ENCODE measurements at regions of chr12 and their contacts with region 1.

Region 1: DNA sequence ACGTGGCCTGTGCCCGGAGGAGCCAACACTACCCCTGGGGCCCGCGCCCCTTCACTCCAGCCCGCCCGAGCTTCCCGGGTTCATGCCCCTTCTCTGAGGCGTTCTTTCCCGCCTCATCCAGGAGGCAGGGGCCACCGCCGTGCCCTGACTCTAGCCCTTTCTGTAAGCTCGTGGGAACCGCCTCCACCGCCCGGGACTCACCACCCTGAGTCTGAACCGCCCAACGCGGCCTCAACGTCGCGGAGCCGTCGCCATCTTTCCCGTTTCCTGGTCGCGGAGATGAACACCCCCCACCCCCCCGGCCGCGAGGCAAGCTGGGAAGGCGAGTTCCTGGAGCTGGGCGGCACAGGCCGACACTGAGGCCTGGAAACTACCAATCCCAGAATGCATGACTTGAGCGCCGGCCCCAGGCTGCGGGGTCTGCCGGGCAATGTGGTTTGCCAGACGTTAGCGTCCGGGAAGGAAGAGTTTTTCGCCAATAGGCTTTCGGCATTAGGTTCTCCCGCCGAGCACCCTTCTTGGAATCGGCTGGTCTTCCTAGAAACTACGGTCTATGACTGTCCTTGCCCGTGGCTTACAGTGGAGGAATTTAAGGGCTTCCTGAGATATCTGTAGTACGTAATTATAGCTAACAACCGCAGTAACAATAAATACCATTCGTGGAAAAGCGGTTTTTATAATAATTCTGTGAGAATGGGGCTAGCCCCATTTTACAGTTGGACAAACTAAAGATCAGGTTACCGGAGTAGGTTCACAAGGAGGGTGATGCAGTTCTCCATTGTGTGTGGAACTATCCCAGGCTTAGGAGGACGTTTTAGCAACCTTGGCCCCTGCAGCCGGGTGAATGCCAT is at the start of gene DDX23:
- DNase-seq: peak; percentile 97
- H3K4me3 ChIP-seq: peak within 1 kb of the TSS; percentile 85 to 92
- H3K27ac ChIP-seq: peak within 1 kb of the TSS; percentile 61 to 85
- H3K4me1 ChIP-seq: peaks cover 0 to 13% of the 10 kb centered on the region in 2 experiments; a peak in 2 of 4 replicates
- H3K27me3 ChIP-seq: no peaks in the 10 kb centered on the region
- CTCF ChIP-seq: no peak
- EP300 ChIP-seq: peak in 1 of 2 experiments; percentile 25; a peak in 1 of 4 replicates
- RAD21 ChIP-seq: no peak
- polyA plus RNA-seq, gene DDX23: 50.4 and 52.5 TPM in 2 replicates

Region 2: DNA sequence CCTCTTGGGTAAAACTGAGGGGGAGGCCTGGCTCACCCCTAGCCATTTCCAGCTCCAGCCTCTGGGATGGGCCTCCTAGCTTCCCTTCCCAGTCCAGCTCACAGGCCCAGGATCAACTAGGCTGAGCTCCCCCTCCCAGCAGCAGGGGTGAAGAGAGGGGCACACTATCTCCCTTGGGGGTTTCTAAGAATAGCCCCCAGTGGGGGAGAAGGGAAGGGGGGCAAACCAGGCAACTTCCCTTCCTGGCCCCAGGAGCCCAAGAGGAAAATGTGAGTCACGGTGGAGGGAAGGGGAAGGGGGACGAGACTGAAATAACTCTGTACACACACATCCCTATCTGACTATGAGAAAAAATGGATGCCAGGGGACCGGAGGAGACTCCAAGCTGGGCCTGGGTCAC is 72.2 kb before region 1 on chr12:
- CTCF ChIA-PET with region 1: no interaction called
- POLR2A ChIA-PET with region 1: no interaction called
- DNase-seq: no peak
- H3K4me3 ChIP-seq: no peak overlapping the region
- H3K27ac ChIP-seq: peak overlapping the region in 1 of 2 experiments; percentile 79; a peak in 2 of 4 replicates
- H3K4me1 ChIP-seq: peaks cover 4 to 14% of the 10 kb centered on the region in 2 experiments; a peak in 3 of 4 replicates
- H3K27me3 ChIP-seq: no peaks in the 10 kb centered on the region
- CTCF ChIP-seq: no peak
- EP300 ChIP-seq: peak in 1 of 2 experiments; percentile 48; a peak in 1 of 4 replicates
- RAD21 ChIP-seq: no peak

Region 3: DNA sequence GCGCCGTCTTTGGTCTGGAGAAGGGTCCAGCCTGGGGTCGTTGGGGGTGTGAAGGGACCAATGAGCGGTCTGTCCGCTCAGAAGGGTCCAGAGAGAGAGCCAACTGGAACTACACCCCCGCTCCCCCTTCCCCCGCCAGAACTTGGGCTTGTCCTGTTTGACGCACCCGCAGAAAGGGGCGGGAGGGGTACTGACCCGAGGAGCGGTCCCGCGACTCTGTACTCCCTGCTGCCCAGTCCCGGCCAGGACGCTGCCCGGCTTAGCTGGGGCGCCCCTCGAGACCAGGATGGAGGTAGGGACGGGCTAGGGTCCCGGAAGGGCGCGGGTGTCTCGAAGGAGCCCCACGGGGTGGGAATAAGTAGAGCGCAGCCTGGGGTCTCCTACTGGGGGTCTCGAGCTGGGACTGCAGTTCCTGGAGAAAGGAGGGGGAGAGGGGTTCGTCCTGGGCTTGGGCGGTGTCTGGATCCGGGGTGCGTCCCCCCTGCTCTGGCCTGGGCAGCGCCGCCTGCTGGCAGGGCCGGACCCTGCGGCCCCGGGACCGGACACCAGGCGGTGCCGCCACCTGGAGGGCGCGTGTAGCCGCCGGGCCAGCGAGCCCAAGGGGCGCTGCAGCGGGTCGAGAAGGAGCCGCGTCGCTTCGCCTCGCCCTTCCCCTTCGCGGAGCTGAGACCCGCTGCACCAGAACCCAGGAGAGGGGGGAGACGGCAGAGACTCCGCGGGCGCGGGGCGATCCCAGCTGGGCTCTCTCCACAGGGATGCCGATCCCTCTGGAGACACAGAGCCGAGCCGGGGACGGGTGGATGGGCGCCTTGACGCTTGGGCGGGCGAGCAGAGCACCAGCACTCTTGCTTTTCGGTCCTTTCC is 37.6 kb before region 1 on chr12:
- CTCF ChIA-PET with region 1: interaction called, 40 read pairs
- POLR2A ChIA-PET with region 1: no interaction called
- DNase-seq: peak; percentile 96
- H3K4me3 ChIP-seq: peak overlapping the region; percentile 68 to 75
- H3K27ac ChIP-seq: peak overlapping the region; percentile 80 to 87
- H3K4me1 ChIP-seq: peaks cover 22 to 37% of the 10 kb centered on the region in 2 experiments; a peak in 3 of 4 replicates
- H3K27me3 ChIP-seq: no peaks in the 10 kb centered on the region
- CTCF ChIP-seq: peak; percentile 92
- EP300 ChIP-seq: no peak
- RAD21 ChIP-seq: peak; percentile 18; the same call in 1 of the 2 replicates

Region 4: GRCh38 chr12:48865434-48866290 is 13.6 kb after region 1 on chr12 and contains the start of gene RND1:
- CTCF ChIA-PET with region 1: interaction called, 95 read pairs
- POLR2A ChIA-PET with region 1: interaction called, 14 read pairs
- DNase-seq: peak; percentile 94
- H3K4me3 ChIP-seq: peak within 1 kb of the TSS; percentile 62 to 92
- H3K27ac ChIP-seq: no peak within 1 kb of the TSS; a peak in 1 of 4 replicates
- H3K4me1 ChIP-seq: peaks cover 0 to 9% of the 10 kb centered on the region in 2 experiments; a peak in 1 of 4 replicates
- H3K27me3 ChIP-seq: peaks cover 16% of the 10 kb centered on the region
- CTCF ChIP-seq: 0 out of 2 replicates have a peak, but pooled peaks have one; percentile 18
- EP300 ChIP-seq: no peak
- RAD21 ChIP-seq: no peak
- polyA plus RNA-seq, gene RND1: 0.19 and 0.39 TPM in 2 replicates

Region 5: DNA sequence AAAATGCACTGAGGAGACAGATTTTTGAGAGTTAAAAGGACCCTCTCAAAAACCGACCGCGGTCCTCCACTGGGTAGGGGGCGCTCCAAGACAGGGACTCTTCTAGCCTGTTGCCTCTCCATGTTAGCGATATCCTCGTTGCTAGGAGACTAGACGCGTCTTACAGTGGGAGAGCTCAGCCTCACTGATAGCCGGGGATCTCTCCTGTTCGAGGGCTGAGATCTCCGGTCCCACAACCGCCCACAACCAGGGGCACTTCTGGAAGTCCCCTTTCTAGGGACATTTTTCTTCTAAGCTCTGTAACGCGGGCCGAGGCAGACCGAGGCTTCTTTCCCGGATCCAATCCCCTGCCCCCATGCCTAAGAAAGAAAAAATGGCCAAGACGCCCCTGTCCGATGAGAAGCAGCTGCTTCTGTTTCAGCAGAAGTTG is 51.9 kb after region 1 on chr12:
- CTCF ChIA-PET with region 1: interaction called, 16 read pairs
- POLR2A ChIA-PET with region 1: interaction called, 4 read pairs
- DNase-seq: peak; percentile 85
- H3K4me3 ChIP-seq: peak overlapping the region; percentile 53 to 84
- H3K27ac ChIP-seq: no peak overlapping the region
- H3K4me1 ChIP-seq: peaks cover 0 to 5% of the 10 kb centered on the region in 2 experiments; a peak in 1 of 4 replicates
- H3K27me3 ChIP-seq: no peaks in the 10 kb centered on the region
- CTCF ChIP-seq: peak; percentile 68
- EP300 ChIP-seq: no peak
- RAD21 ChIP-seq: peak; percentile 23; the same call in 1 of the 2 replicates

Region 6: GRCh38 chr12:48969833-48970701 is 118.0 kb after region 1 on chr12:
- CTCF ChIA-PET with region 1: interaction called, 17 read pairs
- POLR2A ChIA-PET with region 1: no interaction called
- DNase-seq: peak; percentile 83
- H3K4me3 ChIP-seq: no peak overlapping the region; a peak in 1 of 4 replicates
- H3K27ac ChIP-seq: no peak overlapping the region
- H3K4me1 ChIP-seq: peaks cover 0 to 13% of the 10 kb centered on the region in 2 experiments; a peak in 1 of 4 replicates
- H3K27me3 ChIP-seq: peaks cover 40% of the 10 kb centered on the region; the same call in 1 of the 2 replicates
- CTCF ChIP-seq: no peak
- EP300 ChIP-seq: no peak
- RAD21 ChIP-seq: no peak

Region 7: DNA sequence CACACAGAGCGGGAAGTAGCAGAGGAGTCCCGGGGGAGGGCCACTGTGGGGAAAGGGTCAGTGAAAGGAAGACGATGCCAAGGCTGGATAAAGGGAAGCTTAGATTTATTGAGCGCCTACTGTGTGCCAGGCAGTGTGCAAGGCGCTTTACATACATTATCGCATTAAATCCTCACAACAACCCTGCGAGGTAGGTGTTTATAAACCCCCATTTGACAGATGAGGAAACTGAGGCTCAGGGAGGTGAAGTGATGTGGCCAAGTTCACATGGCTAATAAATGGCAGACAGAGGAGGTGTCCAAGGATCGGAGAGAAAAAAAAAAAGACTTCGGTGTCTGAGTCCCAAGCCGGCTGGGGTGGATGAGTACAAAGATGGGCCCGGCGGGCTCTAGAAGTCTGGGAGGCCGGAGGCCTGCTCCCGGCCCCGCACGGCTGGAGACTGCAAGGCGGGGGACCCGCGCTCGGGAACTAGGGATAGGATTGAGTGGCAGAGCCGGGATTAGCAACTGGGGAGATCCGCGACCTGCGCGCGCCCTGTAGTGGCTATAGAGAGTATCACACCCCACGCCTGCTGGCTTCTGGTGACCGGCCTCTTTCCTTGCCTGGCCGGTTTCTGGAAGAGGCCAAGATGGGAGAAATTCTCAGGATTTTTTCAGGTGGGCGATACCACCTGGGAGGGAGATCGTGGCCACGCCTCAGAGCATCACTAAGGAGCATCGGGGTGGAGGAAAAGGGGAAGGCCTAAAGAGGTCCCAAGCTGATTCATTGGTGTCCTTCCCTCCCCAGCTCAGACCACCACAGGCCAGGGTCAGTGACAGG is 143.2 kb after region 1 on chr12:
- CTCF ChIA-PET with region 1: interaction called, 23 read pairs
- POLR2A ChIA-PET with region 1: no interaction called
- DNase-seq: peak; percentile 98
- H3K4me3 ChIP-seq: peak overlapping the region; percentile 1 to 41; a peak in 1 of 4 replicates
- H3K27ac ChIP-seq: no peak overlapping the region
- H3K4me1 ChIP-seq: peaks cover 9 to 17% of the 10 kb centered on the region in 2 experiments; a peak in 3 of 4 replicates
- H3K27me3 ChIP-seq: no peaks in the 10 kb centered on the region; the same call in 1 of the 2 replicates
- CTCF ChIP-seq: peak; percentile 70
- EP300 ChIP-seq: no peak
- RAD21 ChIP-seq: peak; percentile 86

Region 8: DNA sequence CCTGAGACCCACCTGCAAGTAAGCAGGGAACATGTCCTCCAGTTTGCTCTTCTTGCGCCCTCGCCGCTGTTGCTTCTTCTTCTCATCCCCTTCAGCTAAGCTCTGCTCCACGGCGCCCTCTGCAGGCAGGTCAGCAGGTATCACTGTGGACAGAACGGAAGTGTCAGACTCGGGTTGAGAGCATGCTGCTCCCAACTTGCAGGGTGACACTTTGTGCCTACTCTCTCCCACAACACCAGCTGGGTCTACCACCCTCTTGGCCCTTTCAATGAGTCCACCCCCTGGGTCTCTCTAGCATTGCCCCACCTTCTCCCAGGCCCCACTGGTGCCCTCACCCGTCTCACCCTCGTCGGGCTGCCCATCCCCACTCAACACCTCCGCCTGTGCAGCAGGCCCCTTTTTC is 191.7 kb after region 1 on chr12:
- CTCF ChIA-PET with region 1: no interaction called
- POLR2A ChIA-PET with region 1: no interaction called
- DNase-seq: peak; percentile 80
- H3K4me3 ChIP-seq: no peak overlapping the region
- H3K27ac ChIP-seq: no peak overlapping the region
- H3K4me1 ChIP-seq: no peaks in the 10 kb centered on the region
- H3K27me3 ChIP-seq: no peaks in the 10 kb centered on the region
- CTCF ChIP-seq: peak; percentile 67
- EP300 ChIP-seq: no peak
- RAD21 ChIP-seq: no peak

Measured in SK-N-SH (cell line).